Activated CD4-positive, alpha-beta T cell treated with anti-CD3 and anti-CD28 coated beads for 36 hours (primary cell): ENCODE measurements at regions of chrX and their contacts with region 1.

Region 1: DNA sequence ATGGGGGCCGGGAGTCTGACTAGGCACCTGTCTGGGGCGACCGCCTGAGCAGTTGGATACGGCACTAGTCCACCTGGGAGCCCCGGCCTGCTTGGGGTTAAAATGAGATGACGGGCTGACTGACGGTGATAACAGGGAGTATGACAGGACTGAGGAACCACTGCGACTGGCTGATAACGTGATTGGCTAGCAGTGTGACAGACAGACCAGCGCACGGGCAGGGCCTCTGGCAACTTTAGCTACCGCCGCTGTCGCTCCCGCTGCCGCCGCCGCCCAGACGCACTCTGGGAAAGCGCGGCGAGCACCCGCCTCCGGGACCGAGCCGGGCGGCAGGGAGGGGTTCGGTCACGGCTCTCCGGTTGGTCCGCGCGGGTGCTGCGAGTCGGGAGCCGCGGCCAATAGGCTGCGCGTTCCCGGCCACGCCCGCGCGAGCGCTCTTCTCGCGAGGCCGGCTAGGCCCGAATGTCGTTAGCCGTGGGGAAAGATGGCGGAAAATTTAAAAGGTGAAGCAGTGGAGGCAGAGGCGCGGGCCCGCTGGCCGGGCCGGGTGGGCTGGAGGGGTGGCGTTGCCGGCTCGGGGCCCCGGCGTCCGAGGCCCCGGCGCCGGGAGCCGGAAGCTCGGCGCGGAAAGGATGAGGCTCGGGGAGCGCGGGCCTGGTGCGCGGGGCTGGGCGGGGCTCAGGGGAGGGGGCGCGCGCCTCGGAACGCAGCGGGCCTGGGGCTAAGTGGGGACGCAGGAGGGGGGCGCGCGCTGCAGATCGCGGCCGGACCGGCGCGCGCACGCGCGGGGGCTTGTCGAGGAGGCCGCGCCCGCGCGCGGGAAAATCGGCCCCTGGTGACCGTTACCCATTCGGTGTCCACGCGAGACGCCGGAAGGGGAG is at the start of gene SUV39H1:
- DNase-seq: peak; percentile 92
- ATAC-seq: peak; percentile 94
- H3K4me3 Mint-ChIP-seq: peak within 1 kb of the TSS; percentile 91
- H3K27ac Mint-ChIP-seq: peak within 1 kb of the TSS; percentile 92
- H3K4me1 Mint-ChIP-seq: peaks cover 19% of the 10 kb centered on the region
- H3K27me3 Mint-ChIP-seq: no peaks in the 10 kb centered on the region
- total RNA-seq, gene SUV39H1: 30.8 to 31.7 TPM

Region 2: DNA sequence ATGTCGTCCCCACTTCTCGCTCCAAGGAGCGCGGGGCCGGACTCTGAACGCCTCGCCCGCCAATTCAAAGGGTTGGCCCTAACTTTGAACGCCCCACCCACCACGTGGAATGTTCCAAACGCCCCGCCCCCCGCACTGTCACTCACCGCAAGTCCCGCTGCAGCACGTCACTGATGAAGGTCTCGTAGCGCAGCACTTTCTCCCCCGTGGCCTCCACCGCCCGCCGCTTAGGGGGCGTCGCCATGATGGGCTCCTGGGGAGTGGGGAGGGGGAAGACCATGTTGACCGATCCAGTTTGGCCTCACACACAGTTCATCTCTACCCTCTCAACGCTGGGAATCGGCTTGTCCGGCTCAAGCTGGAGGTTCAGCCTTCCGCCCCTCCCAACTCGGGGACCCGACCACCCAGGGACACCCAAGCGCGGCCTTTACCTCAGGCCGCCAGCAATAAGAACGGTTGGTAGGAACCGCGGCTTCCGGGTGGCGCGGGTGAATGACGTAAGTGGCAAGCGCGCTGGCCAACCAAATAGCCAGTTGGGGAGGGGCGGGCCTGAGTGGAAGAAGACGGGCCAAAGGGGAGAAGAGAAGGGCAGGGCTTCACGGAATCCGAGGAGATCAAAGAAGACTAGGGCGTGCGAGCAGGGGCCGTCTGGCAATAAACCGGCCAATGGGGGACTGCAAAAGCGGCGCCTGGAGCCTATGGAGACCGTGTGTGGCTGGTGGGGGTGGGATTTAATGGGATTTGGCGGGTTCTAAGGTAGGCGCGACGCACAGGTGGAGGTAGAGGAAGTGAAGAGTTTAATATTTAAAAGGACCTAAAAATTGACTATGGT is 1037.6 kb before region 1 on chrX and contains the start of gene UXT:
- CTCF ChIA-PET with region 1: no interaction called
- POLR2A ChIA-PET with region 1: no interaction called
- intact Hi-C with region 1: loop called in 1 of 2 experiments (anchors 2 kb)
- DNase-seq: peak; percentile 96
- ATAC-seq: peak; percentile 83
- H3K4me3 Mint-ChIP-seq: peak within 1 kb of the TSS; percentile 86
- H3K27ac Mint-ChIP-seq: peak within 1 kb of the TSS; percentile 94
- H3K4me1 Mint-ChIP-seq: peaks cover 52% of the 10 kb centered on the region
- H3K27me3 Mint-ChIP-seq: no peaks in the 10 kb centered on the region
- total RNA-seq, gene UXT: 195 to 210 TPM

Region 3: GRCh38 chrX:48597353-48598264 is 98.9 kb before region 1 on chrX and contains the start of gene WDR13:
- CTCF ChIA-PET with region 1: no interaction called
- POLR2A ChIA-PET with region 1: no interaction called
- intact Hi-C with region 1: loop called in 1 of 2 experiments (anchors 1 kb)
- DNase-seq: peak; percentile 94
- ATAC-seq: peak; percentile 91
- H3K4me3 Mint-ChIP-seq: peak within 1 kb of the TSS; percentile 99
- H3K27ac Mint-ChIP-seq: peak within 1 kb of the TSS; percentile 98
- H3K4me1 Mint-ChIP-seq: peaks cover 8% of the 10 kb centered on the region
- H3K27me3 Mint-ChIP-seq: no peaks in the 10 kb centered on the region
- total RNA-seq, gene WDR13: 27.2 to 39.4 TPM

Region 4: GRCh38 chrX:48714573-48714972 is 18.0 kb after region 1 on chrX:
- CTCF ChIA-PET with region 1: no interaction called
- POLR2A ChIA-PET with region 1: no interaction called
- intact Hi-C with region 1: loop called in 1 of 2 experiments (anchors 2 kb)
- DNase-seq: no peak
- ATAC-seq: peak; percentile 16
- H3K4me3 Mint-ChIP-seq: peak overlapping the region; percentile 4
- H3K27ac Mint-ChIP-seq: peak overlapping the region; percentile 86
- H3K4me1 Mint-ChIP-seq: peaks cover 78% of the 10 kb centered on the region
- H3K27me3 Mint-ChIP-seq: no peaks in the 10 kb centered on the region

Region 5: DNA sequence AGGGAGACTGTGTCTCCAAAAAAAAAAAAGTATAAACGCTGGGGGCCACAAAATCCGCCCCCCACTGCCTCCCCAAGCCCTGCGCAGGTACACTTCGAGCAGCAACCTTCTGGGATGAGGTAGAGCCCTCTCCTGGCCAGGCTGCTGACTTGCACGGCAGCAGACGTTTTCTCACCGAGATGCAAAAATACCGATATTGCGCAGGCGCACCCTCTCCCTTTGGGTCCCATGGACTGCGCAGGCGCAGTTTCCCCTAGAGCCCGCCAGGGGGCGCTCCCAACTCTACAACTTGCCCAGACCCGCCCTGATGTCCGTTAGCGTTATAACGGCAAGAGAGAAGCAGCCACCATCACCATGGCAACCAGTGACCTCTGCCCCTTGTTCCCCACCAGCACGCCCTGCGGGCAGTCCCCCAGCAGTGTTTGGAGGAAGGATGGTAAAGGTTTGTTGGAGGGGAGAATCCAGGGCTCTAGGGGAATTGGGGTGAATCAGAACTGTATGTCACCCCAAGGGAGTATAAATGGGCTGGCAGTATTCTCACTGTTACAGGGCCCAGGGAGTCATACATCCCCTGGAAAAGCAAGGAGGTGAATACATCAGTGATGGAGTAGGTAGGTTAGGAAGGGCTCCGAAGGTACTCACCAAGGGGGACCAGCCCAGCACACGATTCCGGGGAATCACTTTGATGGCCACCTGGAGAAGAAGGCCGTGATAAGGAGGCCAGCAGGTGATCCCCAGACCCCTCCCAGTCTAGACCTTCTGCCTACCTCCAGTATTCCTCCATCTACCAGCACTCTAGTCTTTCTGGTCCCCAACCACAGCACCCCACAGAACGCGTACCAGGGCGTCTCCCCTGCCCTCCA is 220.8 kb after region 1 on chrX:
- CTCF ChIA-PET with region 1: no interaction called
- POLR2A ChIA-PET with region 1: no interaction called
- intact Hi-C with region 1: loop called in 1 of 2 experiments (anchors 2 kb)
- DNase-seq: peak; percentile 92
- ATAC-seq: peak; percentile 34
- H3K4me3 Mint-ChIP-seq: peak overlapping the region; percentile 97
- H3K27ac Mint-ChIP-seq: peak overlapping the region; percentile 95
- H3K4me1 Mint-ChIP-seq: peaks cover 51% of the 10 kb centered on the region
- H3K27me3 Mint-ChIP-seq: no peaks in the 10 kb centered on the region

Region 6: GRCh38 chrX:49163555-49164419 is 467.2 kb after region 1 on chrX:
- CTCF ChIA-PET with region 1: interaction called, 3 read pairs
- POLR2A ChIA-PET with region 1: no interaction called
- intact Hi-C with region 1: loop called in 1 of 2 experiments (anchors 1 kb)
- DNase-seq: peak; percentile 88
- ATAC-seq: peak; percentile 60
- H3K4me3 Mint-ChIP-seq: peak overlapping the region; percentile 77
- H3K27ac Mint-ChIP-seq: peak overlapping the region; percentile 96
- H3K4me1 Mint-ChIP-seq: peaks cover 27% of the 10 kb centered on the region
- H3K27me3 Mint-ChIP-seq: no peaks in the 10 kb centered on the region